GM13976 (cell line): ENCODE measurements at regions of chr1 and their contacts with region 1.

Region 1: GRCh38 chr1:179002552-179003345 is 22.9 kb upstream of the FAM20B start:
- DNase-seq: peak; percentile 63
- CTCF ChIP-seq: peak; percentile 76

Region 2: DNA sequence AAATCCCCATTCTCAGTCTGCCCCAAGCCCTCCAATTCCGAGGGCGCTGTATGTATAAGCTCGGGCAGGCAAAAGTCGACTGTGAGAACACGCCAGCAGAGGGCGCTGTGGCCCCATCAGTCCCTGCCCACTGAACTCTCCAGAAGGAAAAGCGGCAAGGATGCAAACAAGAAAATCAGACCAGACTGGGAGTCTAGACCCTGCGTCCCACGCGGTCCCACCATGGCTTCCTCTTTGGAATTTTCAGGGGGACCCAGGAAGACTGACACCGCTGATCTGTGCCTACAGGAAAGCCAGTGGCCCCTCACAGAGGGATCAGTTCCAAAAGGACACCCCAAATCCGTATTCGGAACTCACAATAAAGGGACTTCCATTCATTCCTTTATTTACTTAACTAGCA is 470.4 kb before region 1 on chr1:
- in situ Hi-C with region 1: loop called (anchors 5 kb)
- DNase-seq: peak; percentile 87
- CTCF ChIP-seq: peak; percentile 90

Region 3: DNA sequence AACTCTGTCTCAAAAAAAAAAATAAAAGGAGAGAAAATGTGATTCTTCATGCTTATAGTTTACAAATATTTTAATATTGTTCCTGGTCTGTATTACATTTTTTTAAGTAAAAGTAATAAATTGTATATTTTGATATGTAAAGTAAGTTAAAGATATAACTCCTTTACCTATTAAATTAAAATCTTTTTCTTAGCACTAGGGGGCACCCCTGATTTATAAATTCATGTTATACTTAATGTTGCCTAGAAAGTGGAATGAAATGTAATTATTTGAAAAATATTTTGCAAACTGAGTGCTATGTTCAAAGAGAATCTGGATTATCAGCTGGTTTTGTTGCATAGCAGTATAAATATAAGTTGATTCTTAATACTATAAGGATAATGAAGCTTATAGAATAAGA is 228.5 kb before region 1 on chr1:
- in situ Hi-C with region 1: loop called (anchors 10 kb)
- DNase-seq: peak; percentile 23
- CTCF ChIP-seq: no peak

Region 4: DNA sequence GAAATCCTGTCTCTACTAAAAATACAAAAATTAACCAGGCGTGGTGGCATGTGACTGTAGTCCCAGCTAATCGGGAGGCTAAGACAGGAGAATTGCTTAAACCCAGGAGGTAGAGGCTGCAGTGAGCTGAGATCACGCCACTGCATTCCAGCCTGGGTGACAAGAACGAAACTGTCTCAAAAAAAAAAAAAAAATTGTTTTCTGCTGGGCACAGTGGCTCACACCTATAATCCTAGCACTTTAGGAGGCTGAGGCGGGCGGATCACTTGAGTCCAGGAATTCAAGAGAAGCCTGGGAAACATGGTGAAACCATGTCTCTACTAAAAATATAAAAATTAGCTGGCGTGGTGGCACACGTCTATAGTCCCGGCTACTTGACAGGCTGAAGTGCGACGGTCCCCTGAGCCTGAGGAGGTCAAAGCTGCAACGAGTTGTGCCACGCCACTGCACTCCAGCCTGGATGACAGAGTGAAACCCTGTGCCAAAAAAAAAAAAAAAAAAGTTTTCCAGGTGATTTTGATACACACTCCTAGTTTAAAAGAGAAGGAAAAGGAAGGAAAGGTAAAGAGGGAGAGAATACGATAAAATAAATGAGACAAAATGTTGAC is 195.0 kb after region 1 on chr1:
- in situ Hi-C with region 1: no loop called
- DNase-seq: no peak
- CTCF ChIP-seq: no peak